WTC11 (cell line): ENCODE measurements at regions of chr5 and their contacts with region 1.

Region 1: GRCh38 chr5:165616490-165617430 is 2111.3 kb downstream of the MAT2B start:
- DNase-seq: peak; percentile 16
- ATAC-seq: peak; percentile 99
- H3K4me3 Mint-ChIP-seq: no peak overlapping the region; the same call in 1 of the 2 replicates
- H3K27ac Mint-ChIP-seq: peak overlapping the region; percentile 73; the same call in 1 of the 2 replicates
- H3K4me1 Mint-ChIP-seq: peaks cover 20% of the 10 kb centered on the region
- H3K27me3 Mint-ChIP-seq: no peaks in the 10 kb centered on the region
- CTCF ChIP-seq: no peak

Region 2: GRCh38 chr5:165286692-165287231 is 330.0 kb before region 1 on chr5:
- CTCF ChIA-PET with region 1: no interaction called
- POLR2A ChIA-PET with region 1: no interaction called
- DNase-seq: no peak
- ATAC-seq: no peak
- H3K4me3 Mint-ChIP-seq: no peak overlapping the region
- H3K27ac Mint-ChIP-seq: no peak overlapping the region
- H3K4me1 Mint-ChIP-seq: peaks cover 11% of the 10 kb centered on the region
- H3K27me3 Mint-ChIP-seq: no peaks in the 10 kb centered on the region
- CTCF ChIP-seq: no peak

Region 3: DNA sequence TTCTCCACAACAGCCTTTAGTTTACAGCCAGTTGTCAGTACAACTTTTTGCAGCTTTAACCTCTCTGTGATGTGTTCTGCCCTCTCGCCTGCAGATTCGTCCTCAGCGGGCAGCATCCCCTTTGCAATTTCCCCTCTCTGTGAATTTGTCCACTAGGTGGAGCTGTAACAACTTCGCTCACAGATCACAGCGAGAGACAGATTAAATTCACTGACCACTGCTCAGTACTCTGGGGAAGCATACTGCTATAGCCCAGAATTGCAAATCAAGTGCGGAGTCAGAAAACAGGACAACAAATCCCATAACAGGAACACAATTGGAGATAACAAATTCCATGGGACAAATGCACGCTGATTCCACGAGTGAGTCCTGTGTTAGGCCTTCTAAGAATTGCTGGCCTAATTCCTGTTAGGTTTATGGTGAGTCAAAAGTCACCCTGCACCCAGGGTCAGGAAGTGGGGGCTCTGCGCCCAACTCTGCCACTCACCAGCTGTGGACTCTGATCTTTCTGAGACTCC is 13.6 kb after region 1 on chr5:
- CTCF ChIA-PET with region 1: interaction called, 16 read pairs
- POLR2A ChIA-PET with region 1: no interaction called
- DNase-seq: peak; percentile 59
- ATAC-seq: peak; percentile 96
- H3K4me3 Mint-ChIP-seq: no peak overlapping the region
- H3K27ac Mint-ChIP-seq: no peak overlapping the region
- H3K4me1 Mint-ChIP-seq: peaks cover 47% of the 10 kb centered on the region
- H3K27me3 Mint-ChIP-seq: no peaks in the 10 kb centered on the region
- CTCF ChIP-seq: peak; percentile 83